ENCODE measurements at regions of chr9 and their contacts with region 1.

Region 1: GRCh38 chr9:122350638-122351355 is 20.0 kb upstream of the PTGS1 start:
- DNase-seq: peak; percentile 95
- H3K27ac ChIP-seq: no peak overlapping the region
- CTCF ChIP-seq: peak; percentile 98

Region 2: GRCh38 chr9:122099271-122099869 is 251.4 kb before region 1 on chr9:
- CTCF ChIA-PET with region 1: interaction called, 64 read pairs
- POLR2A ChIA-PET with region 1: no interaction called
- DNase-seq: peak; percentile 88
- H3K27ac ChIP-seq: no peak overlapping the region
- CTCF ChIP-seq: peak; percentile 97

Region 3: GRCh38 chr9:122125158-122125508 is 225.7 kb before region 1 on chr9:
- CTCF ChIA-PET with region 1: interaction called, 46 read pairs
- POLR2A ChIA-PET with region 1: no interaction called
- DNase-seq: peak; percentile 96
- H3K27ac ChIP-seq: peak overlapping the region; percentile 44; the same call in 1 of the 2 replicates
- CTCF ChIP-seq: peak; percentile 100

Measured in RWPE1 (cell line).